T-cell (primary cell): ENCODE measurements at regions of chr10 and their contacts with region 1.

Region 1: GRCh38 chr10:13371897-13372470 is 23.9 kb upstream of the SEPHS1 start:
- DNase-seq: peak; percentile 19 to 88 (median 60)
- ATAC-seq: peak; percentile 96 to 100 (median 98)
- H3K4me3 ChIP-seq: no peak overlapping the region
- H3K4me3 Mint-ChIP-seq: no peak overlapping the region
- H3K27ac ChIP-seq: no peak overlapping the region
- H3K27ac Mint-ChIP-seq: no peak overlapping the region
- H3K4me1 ChIP-seq: peaks cover 2% of the 10 kb centered on the region in 2 experiments
- H3K4me1 Mint-ChIP-seq: peaks cover 0 to 2% (median 0%) of the 10 kb centered on the region in 3 donors
- H3K27me3 ChIP-seq: no peaks in the 10 kb centered on the region
- H3K27me3 Mint-ChIP-seq: no peaks in the 10 kb centered on the region

Region 2: GRCh38 chr10:13234172-13234571 is 137.8 kb before region 1 on chr10 and contains the start of gene UCMA:
- CTCF ChIA-PET with region 1: no interaction called
- POLR2A ChIA-PET with region 1: no interaction called
- DNase-seq: no peak
- ATAC-seq: no peak
- H3K4me3 ChIP-seq: no peak within 1 kb of the TSS
- H3K4me3 Mint-ChIP-seq: no peak within 1 kb of the TSS
- H3K27ac ChIP-seq: no peak within 1 kb of the TSS
- H3K27ac Mint-ChIP-seq: no peak within 1 kb of the TSS
- H3K4me1 ChIP-seq: no peaks in the 10 kb centered on the region
- H3K4me1 Mint-ChIP-seq: no peaks in the 10 kb centered on the region
- H3K27me3 ChIP-seq: peaks cover 0 to 4% of the 10 kb centered on the region in 2 experiments
- H3K27me3 Mint-ChIP-seq: no peaks in the 10 kb centered on the region
- total RNA-seq, gene UCMA: not detected

Region 3: DNA sequence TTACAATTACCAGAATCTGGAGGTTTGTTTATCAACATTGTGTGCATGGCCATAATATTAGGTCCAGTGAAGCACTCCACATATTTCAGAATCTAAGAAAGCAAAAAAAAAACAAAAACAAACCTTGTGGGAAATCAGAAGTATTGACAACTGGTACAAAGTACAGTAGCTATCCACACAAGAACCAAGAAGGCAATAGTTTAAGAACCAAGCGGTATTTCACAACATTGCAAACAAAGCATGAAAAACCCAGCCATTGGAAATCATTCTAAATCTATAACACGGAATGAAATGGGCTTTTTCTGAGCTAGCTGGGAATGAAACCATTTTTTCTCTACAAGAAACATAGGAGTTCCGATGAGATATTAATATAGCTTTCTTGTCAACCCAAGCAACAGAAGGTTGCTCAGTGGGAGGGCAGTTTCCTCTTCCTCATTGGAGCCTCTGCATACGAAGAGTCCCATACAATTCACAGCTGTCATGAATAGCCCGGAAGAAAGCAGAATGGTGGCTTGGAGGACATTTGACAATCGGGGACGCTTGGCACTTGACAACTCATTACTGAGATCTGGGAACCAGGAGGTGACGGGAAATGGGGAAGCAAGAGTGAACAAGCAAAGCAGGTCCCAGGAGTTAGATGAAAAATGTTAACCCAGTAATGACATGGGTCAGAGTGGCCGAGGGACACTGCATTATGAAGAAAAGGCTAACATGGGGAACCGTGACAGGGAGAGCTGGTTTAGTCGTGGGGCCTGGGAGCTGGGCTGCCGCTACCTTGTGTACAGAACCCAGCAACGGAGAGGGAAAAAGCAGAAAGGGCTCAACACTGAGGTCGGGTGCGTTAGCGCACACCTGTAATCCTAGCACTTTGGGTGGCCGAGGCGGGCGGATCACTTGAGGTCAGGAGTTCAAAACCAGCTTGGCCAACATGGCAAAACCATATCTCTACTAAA is 79.9 kb before region 1 on chr10:
- CTCF ChIA-PET with region 1: no interaction called
- POLR2A ChIA-PET with region 1: no interaction called
- DNase-seq: no peak
- ATAC-seq: no peak
- H3K4me3 ChIP-seq: no peak overlapping the region
- H3K4me3 Mint-ChIP-seq: no peak overlapping the region
- H3K27ac ChIP-seq: no peak overlapping the region
- H3K27ac Mint-ChIP-seq: no peak overlapping the region
- H3K4me1 ChIP-seq: no peaks in the 10 kb centered on the region
- H3K4me1 Mint-ChIP-seq: peaks cover 0 to 6% (median 0%) of the 10 kb centered on the region in 3 donors
- H3K27me3 ChIP-seq: no peaks in the 10 kb centered on the region
- H3K27me3 Mint-ChIP-seq: no peaks in the 10 kb centered on the region

Region 4: GRCh38 chr10:13440185-13441061 is 68.4 kb after region 1 on chr10:
- CTCF ChIA-PET with region 1: interaction called, 23 to 26 read pairs
- POLR2A ChIA-PET with region 1: no interaction called
- DNase-seq: peak; percentile 12 to 75 (median 58)
- ATAC-seq: peak; percentile 88 to 94 (median 92)
- H3K4me3 ChIP-seq: peak overlapping the region; percentile 35 to 56
- H3K4me3 Mint-ChIP-seq: peak overlapping the region; percentile 29 to 80 (median 64)
- H3K27ac ChIP-seq: no peak overlapping the region
- H3K27ac Mint-ChIP-seq: no peak overlapping the region
- H3K4me1 ChIP-seq: peaks cover 0 to 15% of the 10 kb centered on the region in 2 experiments
- H3K4me1 Mint-ChIP-seq: peaks cover 12 to 16% (median 14%) of the 10 kb centered on the region in 3 donors
- H3K27me3 ChIP-seq: peaks cover 6 to 35% of the 10 kb centered on the region in 2 experiments
- H3K27me3 Mint-ChIP-seq: peaks cover 54 to 59% of the 10 kb centered on the region in 2 donors